GM13976 (cell line): ENCODE measurements at regions of chr6 and their contacts with region 1.

Region 1: GRCh38 chr6:112180095-112180820 is 74.1 kb downstream of the LAMA4 start:
- DNase-seq: peak; percentile 61
- CTCF ChIP-seq: peak; percentile 52

Region 2: GRCh38 chr6:112307707-112308106 is 127.4 kb after region 1 on chr6:
- in situ Hi-C with region 1: loop called (anchors 10 kb)
- DNase-seq: peak; percentile 51
- CTCF ChIP-seq: no peak

Region 3: DNA sequence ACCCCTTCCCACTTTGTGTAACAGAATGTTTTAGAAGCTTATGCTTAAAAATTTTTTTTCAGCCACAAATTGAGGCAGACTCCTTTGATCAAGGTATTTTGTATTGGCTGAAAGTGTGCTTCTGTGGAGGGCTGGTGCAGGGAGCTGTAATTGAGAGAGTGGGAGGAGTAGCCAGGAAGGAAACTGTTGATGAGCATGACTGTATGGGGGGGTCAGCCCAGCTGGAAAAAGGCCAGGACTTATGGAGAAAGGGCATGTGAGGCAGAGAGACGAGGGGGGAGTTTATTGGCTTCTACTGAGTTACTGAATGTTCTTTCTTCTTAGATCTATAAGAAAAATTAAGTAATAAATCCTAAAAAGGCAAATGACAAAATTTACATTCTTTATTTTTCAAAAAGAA is 180.2 kb after region 1 on chr6:
- in situ Hi-C with region 1: no loop called
- DNase-seq: no peak
- CTCF ChIP-seq: no peak

Region 4: GRCh38 chr6:113879186-113880096 is 1699.2 kb after region 1 on chr6:
- in situ Hi-C with region 1: loop called (anchors 25 kb)
- DNase-seq: peak; percentile 37
- CTCF ChIP-seq: peak; percentile 72